GM10248 (cell line): ENCODE measurements at regions of chr17 and their contacts with region 1.

Region 1: DNA sequence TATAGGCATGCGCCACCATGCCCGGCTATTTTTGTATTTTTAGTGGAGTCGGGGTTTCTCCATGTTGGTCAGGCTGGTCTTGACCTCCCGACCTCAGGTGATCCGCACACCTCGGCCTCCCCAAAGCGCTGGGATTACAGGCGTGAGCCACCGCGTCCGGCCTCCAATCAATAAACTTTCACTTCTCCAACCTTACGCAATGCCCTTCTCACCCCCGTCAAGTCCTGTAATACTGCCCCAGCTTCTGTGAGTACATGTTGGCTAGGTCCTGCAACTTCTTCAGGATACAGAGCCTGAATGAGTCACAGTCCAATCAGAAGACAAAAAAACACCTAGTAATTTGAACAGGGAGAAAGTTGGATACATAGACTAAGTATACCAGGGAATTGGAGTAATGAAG is 47.1 kb upstream of the PHOSPHO1 start:
- DNase-seq: no peak
- CTCF ChIP-seq: no peak

Region 2: DNA sequence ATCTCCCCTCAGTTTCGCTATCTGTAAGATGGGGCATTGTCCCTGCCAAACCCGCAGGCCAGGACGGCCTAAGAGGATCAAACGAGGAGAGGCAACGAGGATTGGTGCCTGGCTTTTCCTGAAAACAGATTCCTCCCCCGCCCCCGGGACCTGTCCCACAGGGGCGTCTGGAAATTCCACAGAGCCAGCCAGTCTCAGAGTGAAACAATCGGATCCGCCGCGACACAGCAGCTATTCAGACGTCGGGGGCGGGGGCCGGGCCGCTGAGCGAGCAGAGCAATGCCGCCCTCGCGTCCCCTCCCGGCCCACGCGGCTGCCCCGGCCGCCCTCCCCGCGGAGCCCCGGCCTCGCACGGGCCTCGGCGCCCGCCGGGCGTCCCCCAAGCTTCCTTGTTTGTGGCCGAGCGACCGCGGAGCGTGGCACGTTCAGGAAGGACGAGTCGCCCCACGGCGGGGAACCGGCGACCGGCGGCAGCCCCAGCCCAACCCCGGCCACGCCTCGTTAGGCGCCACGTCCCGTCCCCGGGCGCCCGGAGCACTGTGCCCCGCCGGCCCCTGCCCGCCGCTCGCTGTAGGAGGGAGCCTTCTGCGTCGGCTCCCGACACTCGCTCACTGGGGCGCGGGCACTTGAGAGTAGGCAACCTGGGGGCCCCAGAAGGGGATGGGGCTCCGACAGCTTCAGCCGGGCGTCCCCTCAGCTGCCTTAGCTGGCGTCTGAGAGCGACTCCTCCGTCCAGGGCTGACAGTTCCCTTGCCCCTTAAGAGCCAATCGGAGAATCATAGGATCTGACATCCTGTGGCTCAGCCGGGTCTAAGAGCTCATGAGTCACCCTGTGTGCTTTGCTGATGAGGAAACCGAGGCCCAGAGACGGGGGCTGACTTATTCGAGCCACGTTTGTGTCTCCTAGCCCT is 17.4 kb before region 1 on chr17:
- CTCF ChIA-PET with region 1: no interaction called
- POLR2A ChIA-PET with region 1: no interaction called
- DNase-seq: peak; percentile 68
- CTCF ChIP-seq: no peak

Region 3: DNA sequence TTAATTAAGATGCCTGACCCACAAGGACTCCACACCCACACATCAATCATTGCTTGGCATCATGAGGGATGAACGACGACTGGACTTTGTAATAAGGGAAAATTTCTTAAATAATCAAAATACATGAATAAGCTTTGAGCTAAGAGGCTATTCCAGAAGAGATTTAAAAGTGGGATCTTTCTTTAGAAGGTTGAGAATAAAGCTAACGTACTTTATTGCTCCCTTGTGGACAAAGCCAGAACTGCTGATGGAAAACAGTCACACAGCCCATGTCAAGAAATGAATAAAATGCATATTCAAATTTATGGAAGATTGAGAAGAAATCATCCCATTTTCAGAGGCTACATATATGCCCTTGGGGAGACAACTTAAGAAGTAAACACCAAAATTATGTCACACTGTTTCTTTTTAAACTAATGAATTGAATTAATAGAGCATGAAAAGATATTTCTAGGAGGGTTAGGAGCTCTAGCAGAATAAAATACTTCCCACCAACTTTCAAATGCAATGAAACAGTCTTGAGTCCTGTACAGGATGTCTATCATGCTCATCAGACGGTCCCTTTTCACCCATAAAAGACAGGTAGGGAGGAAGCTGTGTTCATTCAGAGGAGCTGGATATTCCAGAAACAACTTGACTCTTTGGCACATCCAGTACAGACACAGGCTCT is 13.2 kb after region 1 on chr17:
- CTCF ChIA-PET with region 1: interaction called, 10 read pairs
- POLR2A ChIA-PET with region 1: no interaction called
- DNase-seq: no peak
- CTCF ChIP-seq: peak; percentile 37

Region 4: GRCh38 chr17:49349535-49349934 is 71.9 kb after region 1 on chr17:
- CTCF ChIA-PET with region 1: no interaction called
- POLR2A ChIA-PET with region 1: interaction called, 14 read pairs
- DNase-seq: no peak
- CTCF ChIP-seq: no peak